MCF 10A (cell line): ENCODE measurements at regions of chr9 and their contacts with region 1.

Region 1: DNA sequence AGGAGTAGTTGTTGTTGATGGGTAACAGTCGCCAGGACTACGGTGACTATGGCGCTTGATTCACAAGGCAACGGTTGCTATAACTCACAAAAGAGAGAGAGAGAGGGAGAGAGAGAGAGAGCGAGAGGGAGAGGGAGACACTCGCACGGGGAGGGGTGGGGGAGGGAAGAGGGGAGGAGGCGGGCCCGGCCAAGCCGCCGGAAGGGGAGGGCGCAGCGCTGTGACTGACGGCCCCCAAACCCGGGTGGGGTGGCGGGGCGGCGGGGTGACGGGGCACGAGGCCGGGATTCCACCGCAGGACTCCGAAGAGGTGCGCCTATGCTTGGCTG is at the start of gene RFX3:
- DNase-seq: peak; percentile 96
- H3K4me3 Mint-ChIP-seq: peak within 1 kb of the TSS; percentile 94
- H3K27ac Mint-ChIP-seq: peak within 1 kb of the TSS; percentile 100
- H3K4me1 Mint-ChIP-seq: peaks cover 33% of the 10 kb centered on the region
- H3K27me3 Mint-ChIP-seq: no peaks in the 10 kb centered on the region
- CTCF ChIP-seq: no peak
- total RNA-seq, gene RFX3: 9.2 and 9.7 TPM in 2 replicates

Region 2: DNA sequence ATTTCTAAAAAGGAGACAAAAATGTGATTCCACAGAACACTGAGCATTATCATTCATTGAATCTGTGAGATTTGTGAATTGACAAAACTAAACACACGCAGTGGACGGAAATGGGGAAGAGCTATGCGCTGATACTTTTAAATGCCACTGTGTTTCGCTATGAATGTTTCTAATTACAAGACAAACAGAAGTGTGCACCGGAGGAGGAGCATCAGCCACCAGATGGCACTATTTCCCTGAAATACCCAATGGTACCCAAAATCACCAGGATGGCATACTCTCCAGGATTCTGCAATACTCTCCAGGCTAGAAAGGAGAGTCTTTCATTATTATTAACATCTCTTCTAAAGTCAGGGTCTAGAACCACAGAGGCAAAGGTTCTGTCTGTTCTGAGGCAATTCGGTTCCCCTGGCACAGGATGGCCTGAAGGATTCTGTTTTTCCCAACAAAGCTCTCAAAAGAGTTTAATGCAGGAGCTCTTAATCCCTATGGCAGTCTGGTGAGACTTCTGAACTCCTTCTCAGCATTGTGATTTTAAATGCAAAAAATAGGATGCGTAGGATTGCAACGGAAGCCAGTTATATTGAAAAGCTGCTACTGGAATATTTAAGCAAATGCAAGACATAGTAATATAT is 668.1 kb before region 1 on chr9:
- CTCF ChIA-PET with region 1: interaction called, 3 read pairs
- POLR2A ChIA-PET with region 1: no interaction called
- intact Hi-C with region 1: loop called (anchors 10 kb)
- DNase-seq: peak; percentile 74
- H3K4me3 Mint-ChIP-seq: no peak overlapping the region
- H3K27ac Mint-ChIP-seq: no peak overlapping the region
- H3K4me1 Mint-ChIP-seq: no peaks in the 10 kb centered on the region
- H3K27me3 Mint-ChIP-seq: peaks cover 60% of the 10 kb centered on the region
- CTCF ChIP-seq: peak; percentile 71

Region 3: GRCh38 chr9:3074247-3074646 is 451.6 kb before region 1 on chr9:
- CTCF ChIA-PET with region 1: no interaction called
- POLR2A ChIA-PET with region 1: no interaction called
- intact Hi-C with region 1: no loop called
- DNase-seq: no peak
- H3K4me3 Mint-ChIP-seq: no peak overlapping the region
- H3K27ac Mint-ChIP-seq: no peak overlapping the region
- H3K4me1 Mint-ChIP-seq: no peaks in the 10 kb centered on the region
- H3K27me3 Mint-ChIP-seq: no peaks in the 10 kb centered on the region
- CTCF ChIP-seq: no peak

Region 4: DNA sequence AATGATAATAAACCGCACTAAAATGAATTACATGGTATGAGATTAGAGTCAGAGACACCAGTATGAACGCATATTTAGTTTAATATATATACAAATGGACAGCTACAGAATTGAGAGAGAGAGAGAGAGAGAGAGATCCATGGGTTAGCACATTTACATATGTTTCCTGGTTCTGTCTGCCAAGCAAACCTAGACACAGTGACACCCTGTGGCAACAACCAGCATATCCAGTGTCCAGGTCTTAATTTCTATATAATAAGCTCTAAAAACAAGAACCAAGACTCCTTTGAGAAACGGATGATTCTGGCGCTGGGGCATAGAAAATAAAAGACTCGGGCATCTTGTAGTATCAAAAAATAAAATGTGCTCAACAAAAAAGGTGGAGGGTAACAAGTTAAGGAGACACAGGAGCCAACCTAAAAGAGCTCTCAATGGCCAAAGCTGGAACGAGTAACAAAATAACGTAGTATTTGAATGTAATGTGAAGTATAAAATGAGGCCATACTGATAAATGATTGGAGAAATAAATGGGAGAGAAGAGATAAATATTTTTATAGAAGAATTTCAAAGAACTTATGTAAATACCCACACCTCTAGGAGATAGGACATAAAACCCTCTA is 84.5 kb before region 1 on chr9:
- CTCF ChIA-PET with region 1: interaction called, 13 read pairs
- POLR2A ChIA-PET with region 1: interaction called, 9 read pairs
- intact Hi-C with region 1: no loop called
- DNase-seq: peak; percentile 68
- H3K4me3 Mint-ChIP-seq: no peak overlapping the region
- H3K27ac Mint-ChIP-seq: no peak overlapping the region
- H3K4me1 Mint-ChIP-seq: peaks cover 8% of the 10 kb centered on the region
- H3K27me3 Mint-ChIP-seq: no peaks in the 10 kb centered on the region
- CTCF ChIP-seq: peak; percentile 52

Region 5: GRCh38 chr9:3498691-3499090 is 27.1 kb before region 1 on chr9:
- CTCF ChIA-PET with region 1: interaction called, 3 read pairs
- POLR2A ChIA-PET with region 1: interaction called, 17 read pairs
- intact Hi-C with region 1: no loop called
- DNase-seq: no peak
- H3K4me3 Mint-ChIP-seq: no peak overlapping the region
- H3K27ac Mint-ChIP-seq: no peak overlapping the region
- H3K4me1 Mint-ChIP-seq: peaks cover 14% of the 10 kb centered on the region
- H3K27me3 Mint-ChIP-seq: no peaks in the 10 kb centered on the region
- CTCF ChIP-seq: no peak

Region 6: DNA sequence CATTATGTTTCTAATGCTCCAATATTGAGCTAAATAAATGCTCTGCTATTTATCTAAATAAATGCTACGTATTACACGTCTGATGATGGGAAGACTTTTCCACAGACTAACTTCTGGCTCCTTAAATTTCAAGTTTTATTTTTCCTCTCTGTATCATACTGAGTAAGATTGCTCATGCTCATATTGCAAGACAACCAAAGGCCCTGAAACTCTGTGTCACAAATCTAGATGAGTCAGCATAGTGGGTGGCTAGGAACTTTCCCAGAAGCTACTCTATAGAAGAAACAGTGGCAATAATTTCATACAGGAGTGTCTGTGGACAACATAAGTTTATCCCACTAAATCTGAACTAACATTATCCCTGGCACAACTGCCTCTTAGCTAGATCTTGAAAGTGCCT is 53.0 kb after region 1 on chr9:
- CTCF ChIA-PET with region 1: no interaction called
- POLR2A ChIA-PET with region 1: interaction called, 12 read pairs
- intact Hi-C with region 1: no loop called
- DNase-seq: peak; percentile 61
- H3K4me3 Mint-ChIP-seq: no peak overlapping the region
- H3K27ac Mint-ChIP-seq: no peak overlapping the region
- H3K4me1 Mint-ChIP-seq: no peaks in the 10 kb centered on the region
- H3K27me3 Mint-ChIP-seq: no peaks in the 10 kb centered on the region
- CTCF ChIP-seq: no peak